Activated CD8-positive, alpha-beta T cell treated with anti-CD3 and anti-CD28 coated beads for 36 hours (primary cell): ENCODE measurements at regions of chr14 and their contacts with region 1.

Region 1: DNA sequence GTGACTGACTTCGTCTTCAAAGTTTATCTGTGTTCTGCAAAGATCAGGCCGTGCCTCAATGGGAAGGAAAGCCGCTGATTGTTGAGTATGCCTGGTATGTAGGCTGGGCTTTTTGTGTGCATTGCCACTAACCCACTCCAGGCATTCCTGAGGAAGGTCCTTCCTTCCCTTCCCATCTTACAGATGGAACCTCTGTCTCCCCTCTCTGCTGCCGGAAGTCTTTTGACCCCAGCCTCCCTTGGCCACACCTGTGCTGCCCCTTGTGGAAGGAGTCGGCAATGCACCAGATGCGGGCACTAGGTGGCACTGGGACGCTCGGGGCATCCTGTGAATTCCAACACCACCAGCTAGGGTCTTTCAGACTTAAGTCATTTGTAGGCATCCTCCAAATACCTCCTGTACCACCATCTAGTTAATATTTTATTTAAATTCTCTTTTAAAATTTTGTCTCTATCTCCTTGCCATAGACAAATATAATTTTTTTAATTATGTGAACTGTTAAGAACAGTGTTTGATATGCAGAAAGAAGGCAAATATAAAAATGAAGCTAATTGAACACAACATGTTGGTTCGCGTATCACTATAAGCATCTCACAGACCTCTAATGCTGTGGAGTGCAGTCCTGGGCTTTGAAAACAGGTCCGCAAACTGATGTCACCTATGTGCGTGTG is 99.5 kb downstream of the RIN3 start:
- DNase-seq: peak; percentile 80
- ATAC-seq: peak; percentile 38
- H3K4me3 Mint-ChIP-seq: no peak overlapping the region
- H3K27ac Mint-ChIP-seq: peak overlapping the region; percentile 22
- H3K4me1 Mint-ChIP-seq: peaks cover 62% of the 10 kb centered on the region
- H3K27me3 Mint-ChIP-seq: no peaks in the 10 kb centered on the region
- CTCF ChIP-seq: peak; percentile 91

Region 2: GRCh38 chr14:92570674-92571262 is 42.4 kb before region 1 on chr14:
- CTCF ChIA-PET with region 1: no interaction called
- POLR2A ChIA-PET with region 1: no interaction called
- intact Hi-C with region 1: no loop called
- DNase-seq: peak; percentile 17
- ATAC-seq: no peak
- H3K4me3 Mint-ChIP-seq: no peak overlapping the region
- H3K27ac Mint-ChIP-seq: peak overlapping the region; percentile 95
- H3K4me1 Mint-ChIP-seq: peaks cover 70% of the 10 kb centered on the region
- H3K27me3 Mint-ChIP-seq: no peaks in the 10 kb centered on the region
- CTCF ChIP-seq: no peak

Region 3: GRCh38 chr14:92585981-92586937 is 26.9 kb before region 1 on chr14:
- CTCF ChIA-PET with region 1: interaction called, 28 read pairs
- POLR2A ChIA-PET with region 1: interaction called, 3 read pairs
- intact Hi-C with region 1: no loop called
- DNase-seq: peak; percentile 64
- ATAC-seq: peak; percentile 57
- H3K4me3 Mint-ChIP-seq: peak overlapping the region; percentile 41
- H3K27ac Mint-ChIP-seq: peak overlapping the region; percentile 95
- H3K4me1 Mint-ChIP-seq: peaks cover 95% of the 10 kb centered on the region
- H3K27me3 Mint-ChIP-seq: no peaks in the 10 kb centered on the region
- CTCF ChIP-seq: no peak

Region 4: GRCh38 chr14:92635031-92635430 is 21.9 kb after region 1 on chr14:
- CTCF ChIA-PET with region 1: interaction called, 12 read pairs
- POLR2A ChIA-PET with region 1: no interaction called
- intact Hi-C with region 1: no loop called
- DNase-seq: no peak
- ATAC-seq: no peak
- H3K4me3 Mint-ChIP-seq: no peak overlapping the region
- H3K27ac Mint-ChIP-seq: no peak overlapping the region
- H3K4me1 Mint-ChIP-seq: peaks cover 9% of the 10 kb centered on the region
- H3K27me3 Mint-ChIP-seq: no peaks in the 10 kb centered on the region
- CTCF ChIP-seq: no peak

Region 5: GRCh38 chr14:92670160-92670559 is 57.0 kb after region 1 on chr14:
- CTCF ChIA-PET with region 1: interaction called, 18 read pairs
- POLR2A ChIA-PET with region 1: no interaction called
- intact Hi-C with region 1: no loop called
- DNase-seq: no peak
- ATAC-seq: no peak
- H3K4me3 Mint-ChIP-seq: no peak overlapping the region
- H3K27ac Mint-ChIP-seq: peak overlapping the region; percentile 89
- H3K4me1 Mint-ChIP-seq: peaks cover 84% of the 10 kb centered on the region
- H3K27me3 Mint-ChIP-seq: no peaks in the 10 kb centered on the region
- CTCF ChIP-seq: no peak

Region 6: GRCh38 chr14:92686900-92687444 is 73.8 kb after region 1 on chr14:
- CTCF ChIA-PET with region 1: interaction called, 30 read pairs
- POLR2A ChIA-PET with region 1: no interaction called
- intact Hi-C with region 1: no loop called
- DNase-seq: peak; percentile 67
- ATAC-seq: peak; percentile 81
- H3K4me3 Mint-ChIP-seq: no peak overlapping the region
- H3K27ac Mint-ChIP-seq: peak overlapping the region; percentile 25
- H3K4me1 Mint-ChIP-seq: no peaks in the 10 kb centered on the region
- H3K27me3 Mint-ChIP-seq: no peaks in the 10 kb centered on the region
- CTCF ChIP-seq: peak; percentile 99